Caco-2 (cell line): ENCODE measurements at regions of chr7 and their contacts with region 1.

Region 1: GRCh38 chr7:80826520-80827238 is 92.2 kb downstream of the SEMA3C start:
- DNase-seq: no peak
- H3K4me3 ChIP-seq: no peak overlapping the region
- H3K4me3 Mint-ChIP-seq: no peak overlapping the region
- H3K27ac Mint-ChIP-seq: no peak overlapping the region
- H3K4me1 ChIP-seq: peaks cover 18% of the 10 kb centered on the region
- H3K4me1 Mint-ChIP-seq: peaks cover 7% of the 10 kb centered on the region
- H3K27me3 ChIP-seq: no peaks in the 10 kb centered on the region
- H3K27me3 Mint-ChIP-seq: no peaks in the 10 kb centered on the region
- CTCF ChIP-seq: no peak

Region 2: DNA sequence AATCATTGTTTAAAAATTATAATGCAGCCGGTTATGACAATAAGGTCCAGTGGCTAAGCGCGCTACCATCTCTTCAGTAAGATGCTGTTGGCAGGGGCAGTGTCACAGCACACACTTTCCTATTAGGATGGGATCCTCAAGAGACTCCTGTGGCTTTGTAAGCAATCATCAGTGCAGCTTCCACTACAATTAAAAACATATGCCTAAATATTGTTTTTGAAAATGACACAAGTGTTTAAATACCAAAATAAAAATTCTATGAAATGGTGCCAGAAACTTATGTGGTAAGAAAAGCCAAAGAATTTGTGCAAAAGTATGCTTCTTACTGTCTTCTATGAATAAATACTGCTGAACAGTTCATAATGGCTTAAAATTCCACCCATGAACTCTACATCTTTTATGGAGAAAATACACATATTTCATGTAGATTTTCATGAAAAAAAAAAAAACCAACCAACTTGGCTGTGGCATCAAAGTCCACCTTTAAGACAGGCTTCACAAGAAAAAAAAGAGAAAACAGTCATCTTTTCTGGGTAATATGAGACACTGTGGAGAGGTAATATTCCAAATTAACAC is 40.6 kb before region 1 on chr7:
- CTCF ChIA-PET with region 1: no interaction called
- POLR2A ChIA-PET with region 1: no interaction called
- intact Hi-C with region 1: no loop called
- DNase-seq: no peak
- H3K4me3 ChIP-seq: no peak overlapping the region
- H3K4me3 Mint-ChIP-seq: no peak overlapping the region
- H3K27ac Mint-ChIP-seq: no peak overlapping the region
- H3K4me1 ChIP-seq: no peaks in the 10 kb centered on the region
- H3K4me1 Mint-ChIP-seq: no peaks in the 10 kb centered on the region
- H3K27me3 ChIP-seq: no peaks in the 10 kb centered on the region
- H3K27me3 Mint-ChIP-seq: no peaks in the 10 kb centered on the region
- CTCF ChIP-seq: no peak

Region 3: DNA sequence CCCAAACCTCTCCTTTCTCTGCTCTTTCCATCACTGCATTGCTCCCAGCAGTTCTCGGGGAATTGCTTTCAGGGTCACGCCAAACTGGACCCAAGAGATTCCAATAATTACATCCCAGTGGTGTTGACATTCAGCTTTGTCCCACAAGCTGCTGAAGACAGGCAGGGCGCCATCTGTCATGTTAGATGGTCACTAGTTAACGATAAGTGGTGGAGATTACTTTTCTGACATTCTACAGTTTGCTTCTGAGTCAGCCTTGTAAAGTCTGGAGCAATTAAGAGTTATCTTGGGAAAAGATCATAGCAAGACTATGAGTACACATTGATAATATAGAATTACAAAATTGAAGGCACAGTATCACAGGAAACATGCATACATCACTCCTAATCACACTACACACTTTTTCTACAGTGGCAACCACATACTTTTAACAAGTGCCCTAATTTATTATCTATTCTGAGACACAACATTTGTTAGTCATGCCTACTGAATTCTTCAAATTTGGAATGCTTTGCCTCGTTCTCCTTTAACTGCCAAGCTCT is 50.3 kb after region 1 on chr7:
- CTCF ChIA-PET with region 1: no interaction called
- POLR2A ChIA-PET with region 1: no interaction called
- intact Hi-C with region 1: loop called (anchors 1 kb)
- DNase-seq: peak; percentile 70 to 85
- H3K4me3 ChIP-seq: no peak overlapping the region
- H3K4me3 Mint-ChIP-seq: peak overlapping the region; percentile 17
- H3K27ac Mint-ChIP-seq: no peak overlapping the region
- H3K4me1 ChIP-seq: peaks cover 30% of the 10 kb centered on the region
- H3K4me1 Mint-ChIP-seq: peaks cover 45% of the 10 kb centered on the region
- H3K27me3 ChIP-seq: no peaks in the 10 kb centered on the region
- H3K27me3 Mint-ChIP-seq: no peaks in the 10 kb centered on the region
- CTCF ChIP-seq: no peak